GM12878 (cell line): ENCODE measurements at regions of chr17 and their contacts with region 1.

Region 1: GRCh38 chr17:61862975-61863800 is at the start of gene BRIP1:
- DNase-seq: peak; percentile 78
- ATAC-seq: peak; percentile 97
- H3K4me3 ChIP-seq: peak within 1 kb of the TSS; percentile 98
- H3K27ac ChIP-seq: peak within 1 kb of the TSS; percentile 97
- H3K4me1 ChIP-seq: peaks cover 3% of the 10 kb centered on the region; the same call in 1 of the 2 replicates
- H3K27me3 ChIP-seq: no peaks in the 10 kb centered on the region
- CTCF ChIP-seq: no peak
- EP300 ChIP-seq: no peak
- POLR2A ChIP-seq: peak; percentile 91
- RAD21 ChIP-seq: no peak
- polyA plus RNA-seq, gene BRIP1: 4.0 to 4.2 TPM

Region 2: DNA sequence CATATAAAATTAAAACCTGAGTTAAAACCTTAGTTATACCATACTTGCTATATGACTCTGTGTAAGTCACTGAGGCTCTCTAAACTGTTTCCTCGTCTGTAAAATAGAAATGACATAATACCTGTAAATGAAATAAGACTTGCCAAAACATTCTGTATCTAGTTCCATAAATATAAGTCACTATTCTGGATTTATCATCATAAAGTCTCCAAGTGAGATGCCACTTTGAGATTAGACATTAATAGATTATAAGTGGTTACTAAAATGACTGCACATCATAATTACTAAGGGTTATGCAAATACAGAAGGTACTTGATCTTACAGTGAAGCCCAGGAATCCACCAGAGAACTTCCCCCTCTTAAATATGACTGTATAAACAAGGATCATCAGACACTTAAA is 12.1 kb after region 1 on chr17:
- CTCF ChIA-PET with region 1: interaction called, 5 read pairs
- POLR2A ChIA-PET with region 1: interaction called, 3 read pairs
- RAD21 ChIA-PET with region 1: interaction called, 3 read pairs
- SMC1A ChIA-PET with region 1: interaction called, 21 read pairs
- in situ Hi-C with region 1: no loop called
- intact Hi-C with region 1: no loop called
- DNase-seq: no peak
- ATAC-seq: peak; percentile 47
- H3K4me3 ChIP-seq: no peak overlapping the region
- H3K27ac ChIP-seq: no peak overlapping the region
- H3K4me1 ChIP-seq: no peaks in the 10 kb centered on the region
- H3K27me3 ChIP-seq: no peaks in the 10 kb centered on the region
- CTCF ChIP-seq: no peak
- EP300 ChIP-seq: no peak
- POLR2A ChIP-seq: no peak
- RAD21 ChIP-seq: no peak